ENCODE measurements at regions of chrX and their contacts with region 1.

Region 1: DNA sequence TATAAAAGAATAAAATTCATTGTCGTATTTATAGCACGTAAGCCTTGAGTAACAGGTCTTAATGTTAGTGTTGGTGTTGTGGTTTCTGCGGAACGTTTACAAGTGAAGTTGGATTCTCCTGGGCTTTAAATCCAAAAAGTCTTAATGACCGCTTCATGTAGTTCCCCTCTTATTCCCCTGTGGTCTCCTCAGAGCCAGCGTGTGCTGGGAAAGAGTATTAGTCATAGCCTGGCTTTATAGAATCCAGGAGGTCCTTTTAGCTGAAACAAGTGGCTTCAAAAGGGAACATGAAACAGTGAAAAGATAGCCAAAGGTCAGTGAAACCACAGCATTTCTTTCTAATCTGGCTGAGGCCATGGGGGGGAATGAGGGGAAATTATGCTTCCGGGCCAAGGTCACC is 79.1 kb downstream of the CLCN4 start:
- DNase-seq: no peak
- H3K4me3 ChIP-seq: no peak overlapping the region
- H3K27ac ChIP-seq: peak overlapping the region in 1 of 2 donors; percentile 25
- H3K4me1 ChIP-seq: no peaks in the 10 kb centered on the region
- H3K27me3 ChIP-seq: peaks cover 0 to 45% of the 10 kb centered on the region in 2 donors
- CTCF ChIP-seq: no peak
- POLR2A ChIP-seq: no peak

Region 2: DNA sequence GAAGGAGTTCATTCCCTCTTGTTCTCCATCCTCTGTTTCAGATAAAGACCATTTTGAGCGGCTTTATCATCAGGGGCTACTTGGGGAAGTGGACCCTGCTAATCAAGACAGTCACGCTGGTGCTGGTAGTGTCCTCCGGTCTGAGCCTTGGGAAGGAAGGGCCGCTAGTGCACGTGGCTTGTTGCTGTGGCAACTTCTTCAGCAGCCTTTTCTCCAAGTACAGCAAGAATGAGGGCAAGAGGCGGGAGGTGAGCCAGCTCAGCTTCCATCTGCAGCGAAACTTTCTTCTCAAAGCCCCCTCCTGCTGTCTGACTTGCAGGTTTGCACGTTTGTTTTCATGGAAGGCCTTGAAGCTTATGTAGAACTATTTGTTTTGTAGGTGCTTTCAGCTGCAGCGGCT is 29.5 kb before region 1 on chrX:
- intact Hi-C with region 1: loop called (anchors 2 kb)
- DNase-seq: no peak
- H3K4me3 ChIP-seq: no peak overlapping the region
- H3K27ac ChIP-seq: no peak overlapping the region
- H3K4me1 ChIP-seq: no peaks in the 10 kb centered on the region
- H3K27me3 ChIP-seq: peaks cover 0 to 17% of the 10 kb centered on the region in 2 donors
- CTCF ChIP-seq: no peak
- POLR2A ChIP-seq: no peak

Region 3: DNA sequence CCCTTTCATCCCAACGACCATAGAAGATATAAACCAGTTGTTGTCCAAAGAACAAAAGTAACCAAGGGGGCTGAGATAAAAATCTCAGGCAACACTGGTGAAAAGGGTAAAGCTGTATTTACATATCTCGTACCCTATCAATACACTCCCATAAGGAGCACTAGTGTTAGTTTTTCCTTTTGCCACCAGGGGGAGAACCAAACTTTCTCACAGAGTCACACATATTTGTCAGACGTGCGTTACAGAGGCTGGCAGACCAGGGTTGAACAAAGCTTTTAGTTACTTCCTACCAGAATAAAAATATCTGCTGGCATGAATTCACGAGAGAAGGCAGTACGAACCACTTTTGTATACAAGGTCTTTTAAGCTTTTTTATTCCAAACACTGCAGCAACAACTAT is 1145.6 kb after region 1 on chrX:
- intact Hi-C with region 1: no loop called
- DNase-seq: no peak
- H3K4me3 ChIP-seq: no peak overlapping the region
- H3K27ac ChIP-seq: no peak overlapping the region
- H3K4me1 ChIP-seq: no peaks in the 10 kb centered on the region
- H3K27me3 ChIP-seq: peaks cover 0 to 26% of the 10 kb centered on the region in 2 donors
- CTCF ChIP-seq: peak; percentile 36 to 52 (median 43)
- POLR2A ChIP-seq: no peak

Measured in breast epithelium (tissue), 4 donors.